ENCODE measurements at regions of chrX and their contacts with region 1.

Region 1: DNA sequence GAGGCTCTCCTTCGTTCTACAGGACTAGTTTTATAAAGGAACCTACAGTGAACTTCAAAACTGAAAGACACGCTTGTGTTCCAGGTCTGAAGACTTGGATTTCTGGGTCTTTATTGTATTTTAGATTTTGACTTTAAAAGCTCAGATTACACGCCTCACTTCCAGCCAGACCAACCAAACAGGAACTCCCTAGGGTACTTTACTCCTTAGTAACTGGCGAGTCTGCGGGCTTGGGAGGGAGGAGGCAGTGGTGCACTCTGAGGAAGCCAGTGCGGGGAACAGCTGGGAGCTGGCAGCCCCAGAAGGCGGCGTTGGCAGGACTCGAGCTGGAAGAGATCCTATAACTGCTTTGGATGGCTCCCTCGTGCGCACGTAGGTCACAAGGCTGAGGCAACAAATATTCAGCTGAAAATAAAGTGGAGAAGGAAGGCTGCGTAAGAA is 390 bp upstream of the PHKA1 start:
- DNase-seq: peak; percentile 18
- ATAC-seq: no peak
- H3K4me3 Mint-ChIP-seq: peak overlapping the region; percentile 74
- H3K27ac Mint-ChIP-seq: peak overlapping the region; percentile 82
- H3K4me1 Mint-ChIP-seq: peaks cover 10% of the 10 kb centered on the region
- H3K27me3 Mint-ChIP-seq: peaks cover 3% of the 10 kb centered on the region

Region 2: DNA sequence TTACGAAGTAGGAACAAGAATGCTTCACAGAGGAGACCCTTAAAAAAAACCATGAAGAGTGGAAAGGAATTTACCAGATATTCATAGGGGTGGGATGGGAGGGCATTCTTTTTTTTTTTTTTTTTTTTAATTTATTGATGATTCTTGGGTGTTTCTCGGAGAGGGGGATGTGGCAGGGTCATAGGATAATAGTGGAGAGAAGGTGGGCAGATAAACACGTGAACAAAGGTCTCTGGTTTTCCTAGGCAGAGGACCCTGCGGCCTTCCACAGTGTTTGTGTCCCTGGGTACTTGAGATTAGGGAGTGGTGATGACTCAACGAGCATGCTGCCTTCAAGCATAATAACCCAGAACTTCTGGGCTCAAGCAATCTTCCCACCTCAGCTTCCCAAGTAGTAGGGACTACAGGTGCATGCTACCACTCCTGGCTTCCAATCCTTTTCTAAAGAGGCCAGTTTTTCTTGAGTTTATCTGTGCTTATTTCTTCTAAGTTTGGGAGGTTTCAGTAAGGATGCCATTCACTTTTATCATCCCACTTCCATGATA is 1247.4 kb before region 1 on chrX:
- CTCF ChIA-PET with region 1: no interaction called
- POLR2A ChIA-PET with region 1: no interaction called
- intact Hi-C with region 1: no loop called
- DNase-seq: no peak
- ATAC-seq: no peak
- H3K4me3 Mint-ChIP-seq: no peak overlapping the region
- H3K27ac Mint-ChIP-seq: no peak overlapping the region
- H3K4me1 Mint-ChIP-seq: no peaks in the 10 kb centered on the region
- H3K27me3 Mint-ChIP-seq: no peaks in the 10 kb centered on the region

Region 3: DNA sequence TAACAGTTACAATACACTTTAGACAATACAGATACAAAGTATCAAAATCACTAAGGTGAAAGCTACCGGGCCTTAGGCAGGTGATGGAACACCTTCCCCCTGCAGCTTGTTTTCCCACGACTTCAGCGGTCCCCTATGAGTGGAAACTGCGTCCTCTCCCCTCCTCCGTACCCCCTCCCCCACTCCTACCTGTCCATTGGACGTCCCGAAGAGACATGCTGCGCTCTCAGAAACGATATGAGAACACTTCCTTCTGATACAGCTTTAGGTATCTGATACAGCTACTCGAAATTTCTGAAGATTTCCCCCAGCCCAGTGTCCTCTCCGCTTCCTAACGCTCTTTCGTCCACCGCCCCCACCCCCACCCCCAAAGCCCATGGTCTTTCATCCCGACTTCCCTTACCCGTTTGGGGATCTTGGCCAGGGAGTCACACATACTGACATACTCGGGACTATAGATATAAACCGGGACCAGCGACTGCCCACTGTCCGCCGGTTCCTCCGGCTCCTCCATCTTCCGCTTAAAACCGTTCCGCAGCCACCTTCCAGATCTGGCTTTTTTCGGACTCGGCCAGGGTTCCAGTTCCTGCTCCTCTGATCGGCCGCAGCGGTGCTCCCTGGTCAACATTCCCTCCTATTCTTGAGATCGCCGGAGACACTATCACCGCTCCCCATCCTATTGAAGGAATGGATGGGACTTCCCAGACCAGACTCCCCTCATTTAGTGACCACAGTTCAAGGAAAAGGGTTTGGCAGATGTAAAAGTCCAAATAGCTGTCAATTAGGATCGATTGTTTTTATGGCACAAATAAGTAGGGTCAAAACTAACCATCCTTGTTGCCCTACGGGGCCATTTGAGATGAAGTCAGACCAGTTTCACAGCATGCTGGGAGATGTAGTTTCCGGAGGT is 142.0 kb before region 1 on chrX and contains the start of gene HDAC8:
- CTCF ChIA-PET with region 1: no interaction called
- POLR2A ChIA-PET with region 1: no interaction called
- intact Hi-C with region 1: loop called (anchors 5 kb)
- DNase-seq: peak; percentile 59
- ATAC-seq: peak; percentile 90
- H3K4me3 Mint-ChIP-seq: peak within 1 kb of the TSS; percentile 97
- H3K27ac Mint-ChIP-seq: peak within 1 kb of the TSS; percentile 95
- H3K4me1 Mint-ChIP-seq: peaks cover 9% of the 10 kb centered on the region
- H3K27me3 Mint-ChIP-seq: no peaks in the 10 kb centered on the region
- total RNA-seq, gene HDAC8: 13.3 to 16.9 TPM